Activated B cell treated with CpG ODN at 0.5 μM for 24 hours (primary cell): ENCODE measurements at regions of chr4 and their contacts with region 1.

Region 1: GRCh38 chr4:152485726-152486276 is 50.1 kb downstream of the FBXW7 start:
- DNase-seq: no peak
- ATAC-seq: peak; percentile 92
- H3K4me3 Mint-ChIP-seq: peak overlapping the region; percentile 5
- H3K27ac Mint-ChIP-seq: no peak overlapping the region
- H3K4me1 Mint-ChIP-seq: peaks cover 49% of the 10 kb centered on the region
- H3K27me3 Mint-ChIP-seq: no peaks in the 10 kb centered on the region
- CTCF ChIP-seq: no peak

Region 2: GRCh38 chr4:152460488-152460887 is 25.3 kb before region 1 on chr4:
- CTCF ChIA-PET with region 1: no interaction called
- POLR2A ChIA-PET with region 1: interaction called, 8 read pairs
- intact Hi-C with region 1: loop called (anchors 2 kb)
- DNase-seq: no peak
- ATAC-seq: no peak
- H3K4me3 Mint-ChIP-seq: peak overlapping the region; percentile 26
- H3K27ac Mint-ChIP-seq: peak overlapping the region; percentile 77
- H3K4me1 Mint-ChIP-seq: peaks cover 82% of the 10 kb centered on the region
- H3K27me3 Mint-ChIP-seq: no peaks in the 10 kb centered on the region
- CTCF ChIP-seq: no peak

Region 3: GRCh38 chr4:153528705-153529485 is 1043.1 kb after region 1 on chr4:
- CTCF ChIA-PET with region 1: no interaction called
- POLR2A ChIA-PET with region 1: no interaction called
- intact Hi-C with region 1: no loop called
- DNase-seq: no peak
- ATAC-seq: no peak
- H3K4me3 Mint-ChIP-seq: peak overlapping the region; percentile 56
- H3K27ac Mint-ChIP-seq: peak overlapping the region; percentile 82
- H3K4me1 Mint-ChIP-seq: peaks cover 93% of the 10 kb centered on the region
- H3K27me3 Mint-ChIP-seq: no peaks in the 10 kb centered on the region
- CTCF ChIP-seq: no peak